Activated naive CD4-positive, alpha-beta T cell treated with anti-CD3 and anti-CD28 coated beads, Interleukin-2, amount 10 ng/mL, durations not matched to agents 7 days and 5 days (primary cell): ENCODE measurements at regions of chr11 and their contacts with region 1.

Region 1: DNA sequence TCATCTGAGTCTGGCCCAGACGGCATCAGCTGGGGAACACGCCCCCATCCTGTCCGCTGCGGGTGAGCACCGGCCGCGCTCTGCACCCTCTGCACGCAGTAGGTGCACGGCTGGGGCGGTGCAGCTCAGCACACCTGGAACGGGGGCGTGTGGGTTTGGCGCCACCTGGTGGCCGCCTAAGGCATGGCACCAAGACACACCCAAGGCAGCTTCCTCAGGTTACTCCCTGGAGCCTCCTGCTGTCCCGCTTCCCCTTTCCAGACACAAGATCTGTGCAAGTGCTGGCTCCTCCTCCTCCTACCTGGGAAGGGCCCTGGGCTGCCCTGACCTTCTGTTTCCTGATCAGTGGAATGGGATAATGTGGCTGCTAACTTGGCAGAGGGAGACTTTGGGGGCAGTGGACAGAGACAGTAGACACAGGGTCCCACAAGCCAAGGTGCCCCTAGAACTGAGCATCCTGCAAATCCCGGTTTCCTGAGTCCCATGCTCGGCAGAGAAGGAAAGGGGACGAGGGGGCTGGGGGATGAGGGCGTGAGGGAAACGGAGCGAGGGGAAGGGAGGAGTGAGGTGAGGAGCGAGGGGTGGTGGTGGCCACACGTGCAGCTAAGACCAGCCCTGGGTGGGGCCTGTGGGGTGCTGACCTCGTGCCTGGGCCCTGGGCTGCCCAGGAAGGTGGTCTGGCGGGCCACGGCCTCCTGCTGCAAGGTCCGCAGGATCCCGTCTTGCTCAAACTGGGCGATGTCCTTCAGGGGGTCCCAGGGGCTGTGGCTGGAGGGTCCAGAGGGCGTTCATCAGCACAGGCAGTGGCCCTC is 34.8 kb upstream of the CARS1 start:
- DNase-seq: peak; percentile 82
- H3K4me3 Mint-ChIP-seq: no peak overlapping the region
- H3K27ac Mint-ChIP-seq: no peak overlapping the region
- H3K4me1 Mint-ChIP-seq: peaks cover 3% of the 10 kb centered on the region
- H3K27me3 Mint-ChIP-seq: peaks cover 14% of the 10 kb centered on the region

Region 2: GRCh38 chr11:2532704-2533586 is 559.1 kb before region 1 on chr11:
- CTCF ChIA-PET with region 1: interaction called, 56 read pairs
- DNase-seq: peak; percentile 95
- H3K4me3 Mint-ChIP-seq: peak overlapping the region; percentile 40
- H3K27ac Mint-ChIP-seq: peak overlapping the region; percentile 76
- H3K4me1 Mint-ChIP-seq: peaks cover 19% of the 10 kb centered on the region
- H3K27me3 Mint-ChIP-seq: peaks cover 5% of the 10 kb centered on the region

Region 3: GRCh38 chr11:2912498-2912897 is 179.5 kb before region 1 on chr11:
- CTCF ChIA-PET with region 1: no interaction called
- DNase-seq: no peak
- H3K4me3 Mint-ChIP-seq: no peak overlapping the region
- H3K27ac Mint-ChIP-seq: no peak overlapping the region
- H3K4me1 Mint-ChIP-seq: peaks cover 9% of the 10 kb centered on the region
- H3K27me3 Mint-ChIP-seq: peaks cover 19% of the 10 kb centered on the region

Region 4: GRCh38 chr11:2930704-2931428 is 161.1 kb before region 1 on chr11:
- CTCF ChIA-PET with region 1: interaction called, 36 read pairs
- DNase-seq: peak; percentile 62
- H3K4me3 Mint-ChIP-seq: peak overlapping the region; percentile 51
- H3K27ac Mint-ChIP-seq: no peak overlapping the region
- H3K4me1 Mint-ChIP-seq: peaks cover 40% of the 10 kb centered on the region
- H3K27me3 Mint-ChIP-seq: peaks cover 73% of the 10 kb centered on the region

Region 5: DNA sequence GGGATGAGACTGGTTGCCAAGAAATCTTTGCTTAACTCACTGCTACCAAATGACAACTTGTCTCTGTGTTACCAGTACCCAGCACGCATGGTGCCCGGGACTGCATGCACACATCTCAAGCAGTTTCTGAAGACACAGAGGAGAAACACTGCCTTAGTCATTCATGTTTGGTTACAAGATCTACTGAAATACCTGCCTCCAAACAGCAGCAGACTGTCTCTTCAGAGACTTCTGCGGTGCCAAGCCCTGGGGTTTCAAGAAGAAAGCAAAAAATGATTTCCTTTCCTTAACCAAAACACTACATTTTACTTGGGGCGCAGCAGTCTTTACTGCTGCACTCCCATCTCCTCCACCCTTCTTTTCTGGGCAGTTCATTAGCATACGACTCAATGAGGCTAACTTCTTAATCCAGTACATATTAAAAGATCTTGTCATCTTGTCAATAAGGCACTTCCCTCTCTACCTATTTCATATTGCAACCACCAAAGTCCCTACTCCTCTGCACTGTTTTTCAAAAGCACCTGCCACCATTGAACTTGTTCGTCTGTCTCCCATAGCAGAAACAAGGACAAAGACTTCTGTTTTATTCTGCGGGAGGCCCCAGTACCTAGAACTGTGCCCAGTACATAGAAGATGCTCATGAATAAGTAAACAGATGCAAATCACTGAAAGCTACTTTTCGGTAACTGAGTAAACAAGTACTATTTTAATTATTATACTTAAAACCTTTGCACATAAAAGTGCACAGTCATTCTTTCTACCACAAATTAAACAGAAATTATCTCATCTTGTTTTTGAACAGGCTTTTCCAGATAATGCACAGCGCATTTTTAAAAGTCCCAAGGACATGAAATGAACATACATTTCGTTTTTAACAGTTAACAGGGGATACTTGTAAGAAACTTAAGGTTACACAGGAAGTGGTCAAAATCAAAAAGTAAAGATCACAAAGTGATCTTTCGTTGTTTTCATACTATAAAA is 103.8 kb before region 1 on chr11:
- CTCF ChIA-PET with region 1: no interaction called
- DNase-seq: peak; percentile 56
- H3K4me3 Mint-ChIP-seq: peak overlapping the region; percentile 96
- H3K27ac Mint-ChIP-seq: peak overlapping the region; percentile 92
- H3K4me1 Mint-ChIP-seq: peaks cover 49% of the 10 kb centered on the region
- H3K27me3 Mint-ChIP-seq: peaks cover 4% of the 10 kb centered on the region

Region 6: DNA sequence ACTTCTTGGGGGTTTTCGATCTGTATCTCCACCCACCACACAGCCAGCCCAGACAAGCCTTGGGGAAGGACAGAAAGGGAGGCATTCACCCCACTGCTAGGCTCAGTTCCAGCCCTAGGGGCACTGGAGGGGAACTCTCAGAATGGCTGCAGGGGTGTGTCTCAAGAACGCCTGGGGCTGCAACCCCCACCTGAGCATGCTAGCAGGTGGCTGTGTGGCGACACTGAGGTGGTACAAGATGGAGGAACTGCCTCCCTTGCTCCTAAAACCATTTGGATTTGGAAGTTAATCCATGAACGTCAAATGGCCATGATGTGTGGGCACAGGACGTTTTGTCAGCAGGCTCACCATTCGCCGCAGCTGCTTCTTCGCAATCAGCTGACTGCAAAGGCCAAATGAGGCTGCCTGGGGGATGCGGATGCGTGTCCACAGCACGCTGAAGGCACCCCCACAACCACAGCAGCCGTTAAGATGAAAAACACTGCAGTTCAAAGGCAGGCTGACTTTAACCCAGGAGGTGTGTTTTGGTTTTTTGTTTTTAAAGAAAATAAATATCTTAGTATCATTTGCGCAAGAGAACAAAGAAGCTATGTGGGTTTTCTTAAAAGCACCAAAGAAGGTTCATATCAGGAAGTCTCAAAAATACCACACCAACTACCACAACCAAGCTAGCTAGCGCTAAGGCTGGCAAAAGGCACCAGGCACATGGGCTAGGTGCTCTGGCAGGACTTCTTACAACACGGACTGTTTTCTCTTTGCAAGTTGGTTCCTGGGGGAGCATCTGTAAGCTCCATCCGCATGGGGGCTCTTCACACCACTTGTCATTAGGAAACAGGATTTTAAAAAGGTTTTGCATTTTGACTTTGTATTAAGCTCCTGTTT is 77.7 kb before region 1 on chr11:
- CTCF ChIA-PET with region 1: interaction called, 20 read pairs
- DNase-seq: peak; percentile 93
- H3K4me3 Mint-ChIP-seq: peak overlapping the region; percentile 45
- H3K27ac Mint-ChIP-seq: peak overlapping the region; percentile 99
- H3K4me1 Mint-ChIP-seq: peaks cover 95% of the 10 kb centered on the region
- H3K27me3 Mint-ChIP-seq: no peaks in the 10 kb centered on the region

Region 7: GRCh38 chr11:3037040-3037944 is 54.7 kb before region 1 on chr11:
- CTCF ChIA-PET with region 1: interaction called, 59 read pairs
- DNase-seq: peak; percentile 67
- H3K4me3 Mint-ChIP-seq: no peak overlapping the region
- H3K27ac Mint-ChIP-seq: peak overlapping the region; percentile 63
- H3K4me1 Mint-ChIP-seq: peaks cover 35% of the 10 kb centered on the region
- H3K27me3 Mint-ChIP-seq: no peaks in the 10 kb centered on the region

Region 8: DNA sequence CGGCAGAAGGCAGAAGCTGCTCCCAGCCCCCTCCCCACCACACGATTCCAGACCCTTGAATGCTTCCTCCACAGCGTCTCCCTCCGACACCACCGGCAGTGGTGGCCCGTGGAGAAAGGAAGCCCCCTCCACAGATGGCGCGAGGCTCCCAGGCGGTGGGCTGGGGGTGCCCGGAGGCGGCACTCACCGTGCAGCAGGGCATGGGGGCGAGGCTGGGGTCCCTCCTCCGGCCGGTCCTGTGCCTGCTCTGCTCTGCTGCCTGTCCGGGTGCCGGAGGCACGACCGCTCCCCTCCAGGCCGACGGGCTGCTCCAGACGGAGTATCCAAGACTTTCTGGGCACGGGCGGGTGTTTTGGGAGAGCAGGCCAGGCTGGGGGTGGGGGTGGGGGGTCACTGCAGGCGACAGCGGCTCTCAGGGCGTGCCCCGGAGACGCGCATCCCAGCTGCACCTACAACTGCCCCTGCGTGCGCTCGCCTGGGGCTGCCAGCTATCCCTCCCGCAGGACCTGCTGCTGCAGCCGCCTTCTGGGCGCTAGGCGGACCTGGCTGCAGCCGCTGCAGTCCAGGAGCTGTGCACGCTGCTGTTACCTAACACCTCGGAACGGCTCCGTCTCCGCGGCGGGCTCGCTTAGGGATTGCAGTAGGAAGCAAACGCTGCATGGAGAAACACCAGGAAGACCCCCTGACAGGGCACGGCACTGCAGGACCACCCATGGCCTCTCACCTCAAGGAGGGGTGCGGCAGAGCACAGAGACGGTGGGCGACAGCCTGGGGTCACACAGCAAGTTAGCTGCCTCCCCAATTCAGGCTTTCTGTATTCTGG is 111.4 kb after region 1 on chr11:
- CTCF ChIA-PET with region 1: no interaction called
- DNase-seq: no peak
- H3K4me3 Mint-ChIP-seq: no peak overlapping the region
- H3K27ac Mint-ChIP-seq: no peak overlapping the region
- H3K4me1 Mint-ChIP-seq: no peaks in the 10 kb centered on the region
- H3K27me3 Mint-ChIP-seq: peaks cover 58% of the 10 kb centered on the region

Region 9: GRCh38 chr11:3220521-3221407 is 128.8 kb after region 1 on chr11:
- CTCF ChIA-PET with region 1: no interaction called
- DNase-seq: peak; percentile 18
- H3K4me3 Mint-ChIP-seq: no peak overlapping the region
- H3K27ac Mint-ChIP-seq: no peak overlapping the region
- H3K4me1 Mint-ChIP-seq: peaks cover 14% of the 10 kb centered on the region
- H3K27me3 Mint-ChIP-seq: peaks cover 58% of the 10 kb centered on the region